Esophagus muscularis mucosa (tissue), 4 donors: ENCODE measurements at regions of chr6 and their contacts with region 1.

Region 1: DNA sequence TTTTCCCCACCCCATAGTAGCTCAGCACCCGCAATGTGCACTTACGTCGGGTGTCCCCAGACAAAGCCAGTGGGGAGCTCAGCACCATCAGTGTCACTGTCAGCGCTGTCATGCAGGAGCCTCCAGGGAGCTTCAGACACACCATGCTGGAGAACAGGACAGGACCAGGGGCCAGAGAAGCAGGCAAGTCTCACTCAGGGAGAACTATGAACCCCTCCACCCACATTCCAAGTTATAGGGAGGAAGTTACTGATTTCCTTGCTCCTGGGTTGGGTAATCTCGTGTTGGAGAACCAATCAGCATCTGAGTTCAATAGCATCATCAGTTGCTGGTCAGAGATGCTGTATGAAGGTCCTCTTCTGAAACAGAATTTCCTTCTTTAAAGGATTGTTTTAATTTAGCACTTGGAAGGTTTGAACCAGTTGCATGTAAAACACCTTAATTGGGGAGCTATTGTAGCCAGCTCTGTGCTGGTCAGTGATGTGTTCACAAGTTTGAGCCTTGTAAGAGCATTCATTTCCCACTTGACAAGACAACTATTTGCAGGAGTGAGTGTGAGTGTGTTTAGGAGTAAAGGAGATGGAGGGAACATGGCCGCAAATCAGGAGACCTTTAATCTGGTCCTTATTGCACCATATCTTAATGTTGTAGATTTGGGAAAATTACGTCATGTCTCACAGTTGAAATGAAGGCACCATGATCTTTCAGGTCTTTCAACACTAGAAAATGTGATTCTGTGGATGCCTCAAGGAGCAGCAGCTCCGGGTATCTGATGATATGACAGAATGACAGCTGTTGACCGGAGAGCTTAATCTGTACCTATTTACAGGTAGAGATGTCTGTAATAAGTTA is at the start of gene HLA-DRB1:
- DNase-seq: no peak
- H3K4me3 ChIP-seq: peak within 1 kb of the TSS in 1 of 4 donors; percentile 32
- H3K27ac ChIP-seq: peak within 1 kb of the TSS in 1 of 4 donors; percentile 28
- H3K4me1 ChIP-seq: no peaks in the 10 kb centered on the region
- H3K27me3 ChIP-seq: no peaks in the 10 kb centered on the region
- CTCF ChIP-seq: no peak
- EP300 ChIP-seq: no peak
- POLR2A ChIP-seq: no peak
- total RNA-seq, gene HLA-DRB1: 28.2 to 93.2 (median 49.1) TPM

Region 2: GRCh38 chr6:32529697-32530429 is 60.0 kb before region 1 on chr6 and contains the start of gene HLA-DRB5:
- intact Hi-C with region 1: loop called (anchors 5 kb)
- DNase-seq: no peak
- H3K4me3 ChIP-seq: peak within 1 kb of the TSS in 1 of 4 donors; percentile 12
- H3K27ac ChIP-seq: no peak within 1 kb of the TSS
- H3K4me1 ChIP-seq: no peaks in the 10 kb centered on the region
- H3K27me3 ChIP-seq: no peaks in the 10 kb centered on the region
- CTCF ChIP-seq: no peak
- EP300 ChIP-seq: no peak
- POLR2A ChIP-seq: no peak
- total RNA-seq, gene HLA-DRB5: 0.83 to 71.0 (median 7.2) TPM